ENCODE measurements at regions of chr1 and their contacts with region 1.

Region 1: GRCh38 chr1:198253668-198254067 is 96.9 kb downstream of the NEK7 start:
- DNase-seq: no peak
- H3K4me3 Mint-ChIP-seq: no peak overlapping the region
- H3K27ac Mint-ChIP-seq: peak overlapping the region; percentile 61
- H3K4me1 Mint-ChIP-seq: peaks cover 36% of the 10 kb centered on the region
- H3K27me3 Mint-ChIP-seq: no peaks in the 10 kb centered on the region

Region 2: DNA sequence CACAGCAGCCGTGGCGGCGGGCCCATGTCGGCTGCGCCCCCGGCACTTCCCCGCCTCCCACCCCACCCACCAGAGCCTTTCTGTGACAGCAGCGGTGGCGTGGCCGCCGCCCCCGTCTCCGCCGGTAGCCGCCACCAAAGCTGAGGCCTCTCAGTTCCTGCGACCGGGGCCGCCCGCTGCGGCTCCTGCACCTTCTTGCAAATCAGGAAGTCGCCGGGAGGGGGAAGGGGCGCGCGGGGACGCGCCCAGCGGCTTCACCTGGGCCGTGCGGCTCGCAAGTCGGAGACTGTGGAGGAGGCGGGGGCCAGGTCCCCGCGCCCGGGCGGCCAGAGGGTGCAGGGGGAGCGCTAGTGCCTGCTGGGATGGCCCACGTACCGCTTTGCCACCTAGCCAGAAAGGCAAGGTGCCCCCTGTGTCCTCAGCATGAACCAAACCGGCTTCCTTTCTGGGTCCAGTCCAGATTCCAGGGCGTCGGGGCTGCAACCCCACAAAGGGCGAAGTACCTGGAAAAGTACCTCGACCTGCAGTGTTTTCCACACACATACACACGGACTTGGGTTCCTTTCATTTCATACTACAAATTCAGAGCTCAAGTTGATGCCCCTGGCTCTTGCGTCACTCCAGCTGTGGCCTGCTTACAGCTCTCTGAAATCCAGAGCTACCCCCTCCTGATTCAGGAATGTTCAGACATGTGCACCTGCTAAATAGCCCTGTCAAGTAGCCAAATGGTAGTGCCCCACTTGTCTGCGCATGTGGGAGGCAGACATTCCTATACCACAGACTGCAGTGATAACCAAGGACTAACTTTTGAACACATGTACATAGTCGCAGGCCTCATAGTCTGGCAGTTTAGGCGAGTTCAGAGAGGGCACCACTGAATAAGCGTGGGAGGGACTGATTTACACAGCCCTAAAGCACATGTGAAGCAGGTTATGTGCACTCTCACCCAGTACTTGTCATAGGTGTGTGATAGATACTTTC is 478.1 kb before region 1 on chr1 and contains the start of gene DENND1B:
- CTCF ChIA-PET with region 1: no interaction called
- POLR2A ChIA-PET with region 1: no interaction called
- intact Hi-C with region 1: loop called (anchors 5 kb)
- DNase-seq: peak; percentile 87
- H3K4me3 Mint-ChIP-seq: peak within 1 kb of the TSS; percentile 92
- H3K27ac Mint-ChIP-seq: peak within 1 kb of the TSS; percentile 100
- H3K4me1 Mint-ChIP-seq: peaks cover 69% of the 10 kb centered on the region
- H3K27me3 Mint-ChIP-seq: no peaks in the 10 kb centered on the region
- total RNA-seq, gene DENND1B: 12.5 to 15.6 TPM

Region 3: DNA sequence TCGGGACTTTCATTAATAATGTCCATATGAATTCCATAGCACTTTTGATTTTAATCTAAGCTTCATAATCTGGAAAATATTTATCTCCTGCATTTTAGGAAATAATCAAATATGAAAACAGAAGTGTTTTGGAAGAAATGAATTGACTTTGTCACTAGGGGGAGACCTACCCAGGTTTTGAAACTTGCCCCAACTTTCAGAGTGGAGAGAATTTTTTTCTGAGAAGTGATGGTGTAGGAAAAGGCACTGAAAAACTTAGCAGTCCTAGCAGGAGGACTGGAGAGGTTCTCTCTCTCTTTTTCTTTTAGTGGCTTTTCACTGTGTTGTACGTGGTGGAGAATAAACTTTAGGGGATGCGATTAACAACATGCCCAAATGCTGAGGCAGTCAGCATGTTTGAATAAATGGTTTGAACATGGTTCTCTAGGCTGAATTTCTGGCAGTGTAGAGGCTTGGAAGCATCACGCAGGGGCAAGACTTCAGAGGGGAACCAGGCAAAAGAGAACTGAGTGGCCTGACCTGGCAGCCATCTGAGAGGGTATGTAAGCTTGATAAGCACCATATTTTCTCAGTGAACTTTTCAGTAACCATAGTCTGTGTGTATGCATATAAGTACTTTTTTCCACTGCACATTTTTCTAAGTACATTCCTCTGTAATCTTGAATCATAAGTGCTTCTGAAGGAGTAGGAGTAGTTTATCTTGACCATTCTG is 165.2 kb before region 1 on chr1:
- CTCF ChIA-PET with region 1: no interaction called
- POLR2A ChIA-PET with region 1: no interaction called
- intact Hi-C with region 1: loop called (anchors 5 kb)
- DNase-seq: no peak
- H3K4me3 Mint-ChIP-seq: no peak overlapping the region
- H3K27ac Mint-ChIP-seq: no peak overlapping the region
- H3K4me1 Mint-ChIP-seq: peaks cover 7% of the 10 kb centered on the region
- H3K27me3 Mint-ChIP-seq: peaks cover 2% of the 10 kb centered on the region

Region 4: GRCh38 chr1:198234520-198235251 is 19.0 kb before region 1 on chr1:
- CTCF ChIA-PET with region 1: no interaction called
- POLR2A ChIA-PET with region 1: no interaction called
- intact Hi-C with region 1: loop called (anchors 2 kb)
- DNase-seq: no peak
- H3K4me3 Mint-ChIP-seq: peak overlapping the region; percentile 18
- H3K27ac Mint-ChIP-seq: no peak overlapping the region
- H3K4me1 Mint-ChIP-seq: peaks cover 25% of the 10 kb centered on the region
- H3K27me3 Mint-ChIP-seq: no peaks in the 10 kb centered on the region

Region 5: GRCh38 chr1:198352975-198353695 is 99.5 kb after region 1 on chr1:
- CTCF ChIA-PET with region 1: no interaction called
- POLR2A ChIA-PET with region 1: no interaction called
- intact Hi-C with region 1: loop called (anchors 1 kb)
- DNase-seq: no peak
- H3K4me3 Mint-ChIP-seq: no peak overlapping the region
- H3K27ac Mint-ChIP-seq: no peak overlapping the region
- H3K4me1 Mint-ChIP-seq: peaks cover 13% of the 10 kb centered on the region
- H3K27me3 Mint-ChIP-seq: peaks cover 3% of the 10 kb centered on the region

Region 6: DNA sequence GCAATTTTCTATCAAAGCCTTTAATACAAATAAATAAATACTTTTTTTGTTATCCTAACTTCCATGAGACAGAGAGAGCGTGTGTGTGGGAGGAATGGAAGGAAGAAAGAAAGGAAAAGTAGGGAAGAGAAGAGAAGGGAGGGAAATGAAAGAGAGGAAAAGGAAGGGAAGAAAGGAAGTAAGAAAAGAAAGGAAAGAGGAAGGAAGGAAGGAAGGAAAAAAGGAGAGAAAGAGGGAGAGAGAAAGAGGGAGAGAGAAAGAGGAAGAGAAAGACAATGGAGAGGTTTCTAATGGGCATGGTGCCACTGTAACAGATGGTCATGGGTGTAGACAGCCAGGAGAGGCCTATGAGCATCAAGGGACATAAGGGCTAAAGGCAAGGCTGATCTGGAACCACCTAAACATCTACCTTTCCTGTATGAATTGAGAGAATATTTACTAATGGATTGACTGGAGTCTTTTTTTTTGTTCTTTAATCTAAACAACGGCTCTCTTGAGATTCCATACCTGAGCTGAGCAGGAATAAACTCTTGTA is 620.1 kb after region 1 on chr1:
- CTCF ChIA-PET with region 1: no interaction called
- POLR2A ChIA-PET with region 1: no interaction called
- intact Hi-C with region 1: no loop called
- DNase-seq: no peak
- H3K4me3 Mint-ChIP-seq: no peak overlapping the region
- H3K27ac Mint-ChIP-seq: no peak overlapping the region
- H3K4me1 Mint-ChIP-seq: no peaks in the 10 kb centered on the region
- H3K27me3 Mint-ChIP-seq: no peaks in the 10 kb centered on the region

Region 7: DNA sequence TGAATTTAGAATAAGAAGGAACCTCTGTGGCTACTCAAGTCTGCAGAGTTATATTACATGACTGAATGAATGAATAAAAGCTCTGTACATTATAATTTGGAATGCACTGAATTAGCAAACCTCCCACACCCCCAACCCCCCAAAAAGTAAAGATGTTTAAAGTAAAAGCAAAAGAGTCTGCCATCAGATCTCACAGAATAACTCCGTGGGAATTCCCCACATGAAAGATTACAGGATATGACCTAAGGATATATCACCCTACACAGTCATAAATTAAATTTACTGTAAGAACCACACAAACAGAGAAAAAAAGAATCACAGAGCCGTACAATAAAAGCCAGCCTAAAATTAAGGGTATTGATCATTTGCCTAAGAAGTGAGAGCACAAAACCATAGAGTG is 972.5 kb after region 1 on chr1:
- CTCF ChIA-PET with region 1: no interaction called
- POLR2A ChIA-PET with region 1: no interaction called
- intact Hi-C with region 1: loop called (anchors 10 kb)
- DNase-seq: peak; percentile 47
- H3K4me3 Mint-ChIP-seq: peak overlapping the region; percentile 35
- H3K27ac Mint-ChIP-seq: peak overlapping the region; percentile 55
- H3K4me1 Mint-ChIP-seq: peaks cover 20% of the 10 kb centered on the region
- H3K27me3 Mint-ChIP-seq: no peaks in the 10 kb centered on the region